ENCODE measurements at regions of chr13 and their contacts with region 1.

Region 1: DNA sequence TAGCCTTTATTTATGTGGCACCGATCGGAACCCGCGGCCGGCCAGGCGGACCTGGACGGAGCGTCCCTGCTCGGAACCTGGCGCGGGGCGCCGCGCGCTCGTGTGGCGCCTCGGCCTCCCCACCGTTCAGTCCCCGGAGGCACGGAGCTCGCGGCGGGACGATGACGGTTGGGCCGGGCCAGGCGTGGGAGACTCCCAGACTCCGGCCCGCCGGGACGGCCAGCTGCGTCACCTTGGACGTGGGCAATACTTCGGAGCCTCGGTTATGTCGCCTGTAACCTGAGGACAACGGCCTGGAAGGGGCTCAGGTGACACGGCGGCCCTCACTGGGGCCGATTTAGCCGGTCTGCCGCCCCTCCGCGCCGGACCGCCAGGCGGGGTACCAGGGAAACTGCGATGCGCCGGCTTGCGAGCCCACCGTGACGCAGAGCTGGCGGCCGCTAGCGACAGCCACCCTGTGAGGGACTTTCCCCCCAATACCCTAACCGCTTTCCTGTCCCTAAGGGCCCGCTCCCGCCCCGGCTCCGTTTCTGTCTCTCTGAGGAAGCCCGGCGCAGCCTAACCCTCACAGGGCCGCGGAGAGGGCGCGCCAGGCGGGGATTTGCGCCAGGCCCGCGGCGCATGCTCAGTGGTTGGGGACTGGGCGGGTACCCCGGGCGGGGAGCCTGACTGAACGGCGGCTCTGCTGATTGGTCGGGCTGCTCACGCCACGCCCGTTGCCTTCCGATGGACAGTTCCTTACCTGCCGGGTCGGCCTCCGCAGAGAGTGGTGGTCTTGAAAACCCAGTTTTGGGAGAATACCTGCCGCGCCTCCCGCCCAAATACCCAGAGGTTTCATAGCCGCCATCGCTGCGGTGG is 109.5 kb upstream of the DOCK9 start:
- DNase-seq: peak; percentile 95

Region 2: DNA sequence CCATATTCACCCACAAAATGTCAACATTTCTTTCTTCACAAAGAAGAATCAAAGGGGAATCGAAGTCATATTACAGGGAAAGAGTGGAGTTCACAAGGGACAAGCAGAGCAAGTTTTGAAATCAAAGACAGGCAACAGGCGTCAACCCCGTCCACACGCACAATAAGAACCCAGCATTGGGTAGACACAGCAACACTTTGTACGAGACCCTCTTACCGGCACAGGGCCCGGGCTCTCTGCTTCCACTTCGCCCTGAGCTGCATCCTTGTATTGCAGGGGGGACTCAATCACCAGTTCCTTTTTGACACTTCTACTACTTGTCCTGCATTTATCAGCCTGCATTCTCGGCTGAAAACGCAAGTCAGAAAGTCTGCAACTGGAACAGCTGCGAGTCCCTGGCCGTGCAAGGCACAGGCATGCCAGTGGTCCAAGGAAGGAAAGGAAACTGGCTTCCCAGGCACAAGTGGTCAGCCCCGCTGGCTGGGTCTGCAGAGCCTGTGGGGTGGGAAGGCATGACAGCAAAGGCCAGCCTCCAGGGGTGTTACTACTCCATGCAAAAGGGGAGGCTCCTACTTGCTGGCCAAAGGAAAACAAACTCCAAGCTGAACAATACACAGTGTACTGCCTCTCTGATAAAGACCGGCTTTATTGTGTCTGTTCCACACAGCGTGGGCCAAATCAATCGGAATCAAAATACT is 109.6 kb before region 1 on chr13 and contains the start of gene DOCK9:
- intact Hi-C with region 1: loop called (anchors 10 kb)
- DNase-seq: no peak
- total RNA-seq, gene DOCK9: 30.6 TPM

Region 3: DNA sequence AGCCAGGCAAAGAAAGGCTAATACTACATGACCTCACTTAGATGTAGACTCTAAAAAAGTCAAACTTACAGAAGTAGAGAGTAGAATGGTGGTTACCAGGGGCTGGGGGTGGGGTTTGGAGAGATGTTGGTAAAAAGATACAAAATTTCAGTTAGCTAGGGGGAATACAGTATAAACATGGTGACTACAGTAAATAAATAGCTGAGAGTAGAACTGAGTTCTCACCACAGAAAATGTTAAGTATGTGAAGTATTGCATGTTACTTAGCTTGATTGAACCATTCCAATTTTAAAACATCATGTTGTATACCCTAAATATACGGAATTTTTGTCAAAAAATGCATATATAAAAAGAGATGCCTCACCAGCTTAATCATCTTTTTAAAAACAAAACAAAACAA is 41.9 kb before region 1 on chr13:
- intact Hi-C with region 1: loop called (anchors 5 kb)
- DNase-seq: no peak

Region 4: DNA sequence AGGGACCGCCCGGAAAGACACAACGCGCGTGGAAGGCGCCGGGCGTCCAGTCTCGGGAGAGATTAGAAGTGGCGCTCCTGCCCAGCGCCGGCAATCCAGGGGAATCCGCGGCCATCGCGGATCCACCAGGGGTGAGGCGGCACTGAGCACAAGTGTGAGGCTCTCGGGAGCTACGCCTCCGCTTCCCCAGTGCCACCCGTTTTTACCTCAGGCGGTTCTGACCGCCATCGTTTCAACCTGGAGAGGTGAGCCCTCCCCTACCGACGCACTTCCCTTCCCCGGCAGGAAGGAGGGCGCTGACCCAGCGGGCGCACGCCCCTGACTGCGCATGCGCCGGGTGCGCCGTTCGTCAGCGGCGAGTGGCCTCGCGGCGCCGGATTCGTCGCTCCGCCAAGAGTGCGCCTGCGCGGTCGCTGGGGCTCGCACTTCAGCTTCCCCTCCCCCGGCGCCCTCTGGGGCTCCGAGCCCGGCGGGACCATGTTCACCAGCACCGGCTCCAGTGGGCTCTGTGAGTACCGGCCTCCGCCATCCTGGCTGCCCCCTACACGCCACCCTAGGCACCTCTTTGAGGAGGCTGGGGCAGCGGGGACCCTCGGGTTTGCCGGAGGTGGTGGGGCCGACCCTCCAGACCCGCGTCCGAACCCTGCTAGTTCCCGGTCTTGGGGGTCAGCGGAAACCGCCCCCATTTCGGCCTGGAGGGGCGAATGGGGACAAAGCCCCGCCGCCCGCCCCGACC is 113.3 kb after region 1 on chr13 and contains the start of gene UBAC2:
- intact Hi-C with region 1: loop called (anchors 5 kb)
- DNase-seq: peak; percentile 98
- total RNA-seq, gene UBAC2: 61.2 TPM